ENCODE measurements at regions of chr12 and their contacts with region 1.

Region 1: DNA sequence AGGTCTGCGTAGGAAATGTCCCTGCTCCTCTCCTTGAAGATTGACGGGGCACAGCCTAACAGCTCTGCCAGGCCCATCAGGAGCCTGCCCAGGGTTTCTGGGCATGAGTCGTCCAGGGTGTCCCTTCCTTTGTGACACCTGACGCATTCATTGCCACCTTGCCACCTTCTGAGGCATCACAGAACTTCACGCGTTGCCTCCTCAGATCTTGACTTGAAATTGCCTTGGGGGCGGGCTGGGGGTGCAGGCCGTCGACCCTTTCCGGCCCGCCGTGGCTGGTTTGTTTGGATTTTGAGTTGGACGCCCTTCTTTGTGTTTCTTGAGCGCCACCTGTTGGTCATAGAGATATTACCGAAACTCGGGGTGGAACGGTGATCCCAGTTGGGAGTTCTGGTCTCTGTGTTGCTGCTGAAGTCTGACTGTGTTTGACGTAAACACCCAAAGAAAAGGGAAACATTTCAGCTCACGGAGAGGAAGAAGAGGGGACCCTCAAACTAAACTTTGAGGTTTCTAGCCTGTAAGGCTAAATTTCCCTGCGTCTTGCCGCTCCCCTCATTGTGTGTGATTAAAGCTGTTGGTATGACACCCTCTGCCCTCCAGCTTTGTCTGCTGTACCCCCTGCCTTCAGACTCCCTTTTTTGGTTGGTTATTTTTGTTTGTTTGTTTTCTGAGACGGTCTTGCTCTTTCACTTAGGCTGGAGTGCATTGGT is 44.6 kb downstream of the MLXIP start:
- DNase-seq: peak; percentile 58 to 87 (median 78)
- ATAC-seq: peak; percentile 79 to 80
- H3K4me3 Mint-ChIP-seq: peak overlapping the region; percentile 49 to 87 (median 68)
- H3K27ac Mint-ChIP-seq: peak overlapping the region; percentile 81 to 95 (median 87)
- H3K4me1 Mint-ChIP-seq: peaks cover 30 to 74% (median 61%) of the 10 kb centered on the region in 4 donors
- H3K27me3 Mint-ChIP-seq: peaks cover 0 to 1% (median 0%) of the 10 kb centered on the region in 5 donors

Region 2: GRCh38 chr12:122090759-122091515 is 32.3 kb before region 1 on chr12:
- POLR2A ChIA-PET with region 1: interaction called, 13 read pairs
- DNase-seq: no peak
- ATAC-seq: peak in 1 of 2 donors; percentile 13
- H3K4me3 Mint-ChIP-seq: peak overlapping the region in 8 of 10 donors; percentile 30 to 97 (median 70)
- H3K27ac Mint-ChIP-seq: peak overlapping the region in 2 of 10 donors; percentile 87 to 92
- H3K4me1 Mint-ChIP-seq: peaks cover 29 to 43% (median 31%) of the 10 kb centered on the region in 4 donors
- H3K27me3 Mint-ChIP-seq: no peaks in the 10 kb centered on the region